ENCODE measurements at regions of chr12 and their contacts with region 1.

Region 1: GRCh38 chr12:123713398-123713797 is 1.2 kb downstream of the ATP6V0A2 start:
- DNase-seq: no peak
- H3K4me3 ChIP-seq: peak overlapping the region; percentile 86
- H3K27ac ChIP-seq: no peak overlapping the region
- H3K27me3 ChIP-seq: no peaks in the 10 kb centered on the region
- CTCF ChIP-seq: no peak

Region 2: DNA sequence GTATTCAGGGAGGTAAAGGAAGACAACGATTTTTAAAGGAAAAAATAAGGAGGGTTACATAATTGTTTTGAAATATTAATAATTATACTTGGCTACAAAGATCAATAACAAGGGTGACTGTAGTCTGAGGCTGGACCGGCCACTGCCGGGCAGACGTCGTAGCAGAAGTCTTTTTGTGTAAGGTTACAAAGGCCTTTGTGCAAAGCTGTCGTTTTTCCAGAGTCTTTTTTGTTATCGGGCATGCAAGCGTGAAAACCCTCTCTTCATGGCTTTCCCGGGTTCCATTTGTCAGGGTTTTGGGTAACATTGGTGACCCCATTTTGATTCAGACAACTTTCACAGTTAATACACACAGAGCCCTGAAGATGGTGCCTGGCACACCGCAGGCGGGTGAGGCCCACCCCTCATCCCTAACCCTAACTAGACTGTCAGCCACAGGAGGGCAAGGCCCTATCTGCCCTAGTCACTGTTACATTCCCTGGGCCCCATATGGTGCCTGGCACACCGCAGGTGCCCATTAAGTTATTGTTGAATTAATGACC is 211.2 kb before region 1 on chr12:
- CTCF ChIA-PET with region 1: no interaction called
- POLR2A ChIA-PET with region 1: no interaction called
- DNase-seq: no peak
- H3K4me3 ChIP-seq: no peak overlapping the region
- H3K27ac ChIP-seq: no peak overlapping the region
- H3K27me3 ChIP-seq: no peaks in the 10 kb centered on the region
- CTCF ChIP-seq: no peak

Region 3: DNA sequence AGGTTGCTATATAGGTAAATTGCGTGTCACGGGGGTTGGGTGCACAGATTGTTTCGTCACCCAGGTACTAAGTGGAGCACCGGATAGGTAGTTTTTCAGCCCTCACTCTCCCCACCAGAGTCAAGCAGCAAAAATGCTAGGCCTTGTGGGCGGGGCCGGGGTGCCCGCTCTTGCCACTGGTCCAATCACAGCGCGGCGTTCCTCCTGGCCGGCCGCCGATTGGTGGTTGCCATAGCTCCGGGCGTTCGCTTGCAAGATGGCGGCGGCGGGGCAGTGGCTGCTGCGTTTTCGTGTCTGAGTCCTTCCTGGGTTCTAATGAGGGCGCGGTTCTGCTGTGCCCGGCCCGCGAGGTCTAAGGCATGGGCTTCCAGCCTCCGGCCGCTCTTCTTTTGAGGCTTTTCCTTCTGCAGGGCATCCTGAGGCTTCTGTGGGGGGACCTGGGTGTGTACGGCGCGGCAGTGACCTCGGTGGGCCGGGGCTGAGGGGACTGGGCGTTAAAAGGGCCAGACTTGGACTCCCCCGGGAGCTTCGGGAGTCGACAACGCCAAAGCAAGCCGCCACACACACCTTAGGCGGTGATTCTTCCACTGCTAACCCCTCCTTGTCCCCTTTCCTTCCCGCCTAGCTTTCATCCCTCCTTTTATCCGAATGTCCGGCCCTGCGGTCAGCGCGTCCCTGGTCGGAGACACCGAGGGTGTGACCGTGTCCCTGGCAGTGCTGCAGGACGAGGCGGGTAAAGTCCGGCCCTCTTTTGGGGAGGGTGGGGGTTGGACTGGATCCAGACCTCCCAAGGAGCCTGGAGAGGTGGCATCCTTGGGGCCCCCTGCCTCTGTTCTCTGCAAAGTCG is 42.3 kb before region 1 on chr12 and contains the start of gene TCTN2:
- CTCF ChIA-PET with region 1: no interaction called
- POLR2A ChIA-PET with region 1: interaction called, 10 read pairs
- DNase-seq: peak; percentile 72
- H3K4me3 ChIP-seq: peak within 1 kb of the TSS; percentile 86
- H3K27ac ChIP-seq: peak within 1 kb of the TSS; percentile 31
- H3K27me3 ChIP-seq: no peaks in the 10 kb centered on the region
- CTCF ChIP-seq: no peak
- polyA plus RNA-seq, gene TCTN2: 8.6 and 9.1 TPM in 2 replicates

Measured in AG04450 (cell line).